Activated CD4-positive, alpha-beta memory T cell treated with anti-CD3 and anti-CD28 coated beads, Interleukin-2, amount 10 ng/mL, durations not matched to agents 7 days and 5 days (primary cell): ENCODE measurements at regions of chr7 and their contacts with region 1.

Region 1: DNA sequence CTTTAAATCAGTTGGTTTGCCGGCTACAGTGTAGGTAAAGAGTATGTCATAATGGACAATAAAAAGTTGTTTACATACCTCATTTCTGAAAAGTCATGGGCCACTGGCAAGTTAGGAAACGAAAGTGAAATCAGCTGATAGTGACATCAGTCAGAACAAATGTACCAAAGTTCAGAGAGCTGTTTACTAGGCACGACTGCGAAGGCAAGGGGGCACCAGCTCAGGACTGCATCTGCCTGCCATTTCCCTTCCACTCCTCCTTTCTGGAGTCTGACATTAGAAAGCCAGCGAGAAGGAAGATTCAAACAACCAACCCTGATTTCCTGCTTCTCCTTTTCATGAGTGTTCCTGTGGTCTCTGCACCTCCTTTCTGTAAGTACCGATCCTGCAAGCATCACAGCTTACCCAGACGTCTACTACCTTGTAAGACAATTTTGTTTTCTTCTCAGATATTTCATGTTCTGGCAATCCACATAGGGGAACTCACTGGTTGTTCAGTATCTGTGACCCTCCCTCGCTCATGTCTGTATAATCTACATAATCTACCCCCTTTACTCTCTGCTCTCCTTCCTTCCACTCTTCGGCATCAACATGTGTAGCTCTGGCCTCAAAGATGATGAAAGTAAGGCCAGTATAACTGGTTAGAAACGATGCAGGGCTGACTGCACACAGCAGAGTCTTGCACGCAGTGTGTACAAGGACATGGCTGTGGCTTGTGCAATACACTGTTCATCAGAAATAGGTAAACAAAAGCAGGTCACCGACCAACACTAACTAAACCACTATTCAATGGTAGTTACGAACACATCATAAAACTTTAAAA is at the start of gene TMEM140:
- DNase-seq: peak; percentile 70
- H3K4me3 Mint-ChIP-seq: peak within 1 kb of the TSS; percentile 82
- H3K27ac Mint-ChIP-seq: peak within 1 kb of the TSS; percentile 91
- H3K4me1 Mint-ChIP-seq: peaks cover 53% of the 10 kb centered on the region
- H3K27me3 Mint-ChIP-seq: no peaks in the 10 kb centered on the region
- total RNA-seq, gene TMEM140: 36.5 to 37.1 TPM

Region 2: DNA sequence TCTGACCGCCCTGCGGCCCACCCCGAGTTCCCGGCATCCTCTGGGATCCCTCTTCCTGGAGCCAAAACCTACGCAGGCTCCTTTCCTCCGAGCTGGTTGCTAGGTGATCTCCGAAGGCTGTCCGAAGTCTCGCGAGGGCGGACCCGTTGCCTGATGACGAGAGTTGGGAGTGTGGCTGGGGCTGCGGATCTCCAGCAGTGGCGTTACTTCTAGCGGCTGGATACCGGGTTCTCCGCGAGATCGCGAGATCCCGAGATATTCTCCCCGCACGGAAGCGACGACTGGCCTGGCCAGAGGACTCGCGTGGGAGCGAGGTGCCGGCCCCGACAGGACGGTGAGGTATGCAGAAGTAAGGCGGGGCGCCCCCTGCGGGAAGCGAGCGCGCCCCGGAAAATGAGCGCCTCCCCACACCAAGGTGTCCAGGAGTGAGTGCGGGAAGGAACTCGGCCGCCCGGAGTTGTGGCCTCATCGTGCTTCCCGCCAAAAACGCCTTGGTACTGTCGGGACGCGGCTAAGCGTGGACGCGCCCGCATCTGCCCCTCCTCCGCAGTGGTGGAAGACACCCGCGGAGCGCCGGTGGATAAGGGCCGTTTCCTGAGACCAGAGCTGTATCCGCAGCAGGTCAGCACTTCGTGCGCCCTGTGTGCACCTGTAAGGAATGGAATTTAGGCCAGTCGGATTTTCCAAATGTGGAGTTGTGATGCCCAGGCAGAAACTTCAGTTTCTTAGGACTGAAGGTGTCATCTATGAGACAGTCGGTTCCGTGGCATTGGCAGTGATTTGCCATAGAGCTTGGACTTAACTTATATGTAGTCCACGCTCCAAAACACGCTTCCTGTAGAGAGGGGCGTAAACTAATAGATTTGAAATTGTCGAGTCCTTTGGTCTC is 161.5 kb before region 1 on chr7 and contains the start of gene AGBL3:
- CTCF ChIA-PET with region 1: interaction called, 27 read pairs
- POLR2A ChIA-PET with region 1: interaction called, 32 read pairs
- DNase-seq: peak; percentile 94
- H3K4me3 Mint-ChIP-seq: peak within 1 kb of the TSS; percentile 98
- H3K27ac Mint-ChIP-seq: peak within 1 kb of the TSS; percentile 90
- H3K4me1 Mint-ChIP-seq: peaks cover 34% of the 10 kb centered on the region
- H3K27me3 Mint-ChIP-seq: no peaks in the 10 kb centered on the region
- total RNA-seq, gene AGBL3: 2.8 to 3.4 TPM

Region 3: GRCh38 chr7:135128931-135129330 is 19.2 kb before region 1 on chr7:
- CTCF ChIA-PET with region 1: no interaction called
- POLR2A ChIA-PET with region 1: no interaction called
- DNase-seq: no peak
- H3K4me3 Mint-ChIP-seq: no peak overlapping the region
- H3K27ac Mint-ChIP-seq: no peak overlapping the region
- H3K4me1 Mint-ChIP-seq: no peaks in the 10 kb centered on the region
- H3K27me3 Mint-ChIP-seq: peaks cover 5% of the 10 kb centered on the region

Region 4: GRCh38 chr7:135160098-135160857 is 12.2 kb after region 1 on chr7:
- CTCF ChIA-PET with region 1: interaction called, 9 read pairs
- POLR2A ChIA-PET with region 1: interaction called, 181 read pairs
- DNase-seq: peak; percentile 18
- H3K4me3 Mint-ChIP-seq: peak overlapping the region; percentile 33
- H3K27ac Mint-ChIP-seq: peak overlapping the region; percentile 83
- H3K4me1 Mint-ChIP-seq: peaks cover 54% of the 10 kb centered on the region
- H3K27me3 Mint-ChIP-seq: no peaks in the 10 kb centered on the region

Region 5: GRCh38 chr7:135170274-135170997 is 22.3 kb after region 1 on chr7 and contains the start of gene CYREN:
- CTCF ChIA-PET with region 1: interaction called, 88 read pairs
- POLR2A ChIA-PET with region 1: interaction called, 181 read pairs
- DNase-seq: peak; percentile 90
- H3K4me3 Mint-ChIP-seq: peak within 1 kb of the TSS; percentile 87
- H3K27ac Mint-ChIP-seq: peak within 1 kb of the TSS; percentile 93
- H3K4me1 Mint-ChIP-seq: peaks cover 51% of the 10 kb centered on the region
- H3K27me3 Mint-ChIP-seq: no peaks in the 10 kb centered on the region
- total RNA-seq, gene CYREN: 32.0 to 32.1 TPM

Region 6: GRCh38 chr7:135211179-135211945 is 63.3 kb after region 1 on chr7 and contains the start of gene WDR91:
- CTCF ChIA-PET with region 1: interaction called, 6 read pairs
- POLR2A ChIA-PET with region 1: interaction called, 27 read pairs
- DNase-seq: peak; percentile 97
- H3K4me3 Mint-ChIP-seq: peak within 1 kb of the TSS; percentile 94
- H3K27ac Mint-ChIP-seq: peak within 1 kb of the TSS; percentile 91
- H3K4me1 Mint-ChIP-seq: peaks cover 30% of the 10 kb centered on the region
- H3K27me3 Mint-ChIP-seq: no peaks in the 10 kb centered on the region
- total RNA-seq, gene WDR91: 10.7 to 11.6 TPM